HepG2 (cell line): ENCODE measurements at regions of chr12 and their contacts with region 1.

Region 1: DNA sequence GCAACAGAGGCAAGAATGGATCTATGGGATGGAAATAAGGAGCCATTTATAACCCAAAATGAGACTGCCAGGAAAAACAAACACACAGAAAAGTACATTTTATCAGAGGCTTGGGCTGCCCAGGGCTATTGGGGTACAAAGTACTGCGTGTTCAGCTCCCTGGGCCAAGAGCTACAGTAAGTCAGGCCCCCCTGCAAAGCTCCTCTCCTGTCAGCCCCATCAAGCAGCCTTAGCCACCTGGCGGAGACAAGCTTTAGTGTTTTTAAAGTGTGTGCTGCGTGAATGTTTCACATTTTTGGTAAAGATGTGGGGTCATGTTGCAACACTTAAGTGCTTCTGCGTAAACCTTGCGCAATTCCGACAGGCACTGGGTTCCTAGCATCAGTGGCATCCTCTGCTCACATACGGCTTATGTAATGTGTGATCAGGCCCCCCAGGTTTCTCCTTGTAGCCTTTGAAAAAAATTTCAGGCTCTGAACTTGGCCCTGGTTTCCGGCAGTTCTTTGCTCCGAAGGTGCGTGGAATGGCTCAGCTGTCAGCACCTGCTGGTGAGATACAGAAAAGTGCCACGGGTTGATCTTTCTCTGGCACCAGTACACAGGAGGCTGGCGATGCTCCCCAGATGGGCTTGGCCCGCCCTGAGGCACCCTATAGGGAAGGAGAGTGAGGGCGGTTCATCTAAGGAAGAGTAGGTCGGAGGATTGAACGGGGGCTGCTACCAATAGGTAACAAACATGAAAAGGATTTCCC is 198.7 kb upstream of the EEA1 start:
- DNase-seq: peak; percentile 98
- ATAC-seq: peak; percentile 95
- H3K4me3 ChIP-seq: peak overlapping the region in 2 of 3 experiments; percentile 6 to 50; a peak in 2 of 6 replicates
- H3K27ac ChIP-seq: peak overlapping the region; percentile 81
- H3K4me1 ChIP-seq: peaks cover 86% of the 10 kb centered on the region
- H3K27me3 ChIP-seq: no peaks in the 10 kb centered on the region
- CTCF ChIP-seq: peak; percentile 88
- EP300 ChIP-seq: peak; percentile 93 to 99
- POLR2A ChIP-seq: 0 out of 4 replicates have a peak, but pooled peaks of 1 of the 2 experiments have one; percentile 10
- RAD21 ChIP-seq: peak; percentile 93

Region 2: DNA sequence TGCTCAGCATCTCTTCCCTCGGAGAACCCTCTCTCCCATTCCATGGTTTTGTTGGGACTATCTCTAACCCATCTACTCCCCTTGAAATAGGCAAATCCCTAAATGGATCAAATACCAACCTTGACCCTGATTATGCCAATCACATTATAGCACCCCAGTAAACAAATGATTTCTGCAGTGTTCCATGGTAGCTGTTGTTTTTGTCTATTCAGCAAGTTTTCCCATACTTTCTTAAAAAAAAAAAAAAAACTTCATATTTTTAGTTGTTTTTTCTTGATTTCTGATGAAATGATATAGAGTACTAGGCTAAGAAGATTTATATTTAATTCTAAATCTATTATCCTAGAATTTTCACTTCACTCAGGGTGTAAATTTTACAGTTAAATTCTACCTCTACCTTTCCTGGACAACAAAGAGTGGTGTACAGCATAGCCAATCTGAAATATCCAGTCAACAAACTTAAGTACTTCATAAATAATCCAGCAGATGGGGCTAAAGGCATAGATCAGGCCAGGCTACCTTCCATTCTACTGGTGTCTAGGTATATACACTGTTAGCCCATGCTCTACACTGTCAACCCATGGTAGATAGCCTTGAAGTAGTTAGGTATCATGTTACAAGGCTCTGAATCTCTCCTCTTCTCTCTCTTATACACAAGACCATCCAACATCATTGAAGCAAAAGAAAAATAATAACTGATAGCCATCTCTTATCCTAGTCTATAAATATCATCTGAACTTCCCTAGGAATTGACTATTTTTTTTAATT is 342.8 kb before region 1 on chr12:
- CTCF ChIA-PET with region 1: interaction called, 4 read pairs
- POLR2A ChIA-PET with region 1: no interaction called
- in situ Hi-C with region 1: no loop called
- intact Hi-C with region 1: loop called (anchors 10 kb)
- DNase-seq: peak; percentile 85
- ATAC-seq: peak; percentile 100
- H3K4me3 ChIP-seq: no peak overlapping the region
- H3K27ac ChIP-seq: no peak overlapping the region
- H3K4me1 ChIP-seq: no peaks in the 10 kb centered on the region
- H3K27me3 ChIP-seq: no peaks in the 10 kb centered on the region
- CTCF ChIP-seq: peak; percentile 85
- EP300 ChIP-seq: no peak
- POLR2A ChIP-seq: no peak
- RAD21 ChIP-seq: peak; percentile 75

Region 3: DNA sequence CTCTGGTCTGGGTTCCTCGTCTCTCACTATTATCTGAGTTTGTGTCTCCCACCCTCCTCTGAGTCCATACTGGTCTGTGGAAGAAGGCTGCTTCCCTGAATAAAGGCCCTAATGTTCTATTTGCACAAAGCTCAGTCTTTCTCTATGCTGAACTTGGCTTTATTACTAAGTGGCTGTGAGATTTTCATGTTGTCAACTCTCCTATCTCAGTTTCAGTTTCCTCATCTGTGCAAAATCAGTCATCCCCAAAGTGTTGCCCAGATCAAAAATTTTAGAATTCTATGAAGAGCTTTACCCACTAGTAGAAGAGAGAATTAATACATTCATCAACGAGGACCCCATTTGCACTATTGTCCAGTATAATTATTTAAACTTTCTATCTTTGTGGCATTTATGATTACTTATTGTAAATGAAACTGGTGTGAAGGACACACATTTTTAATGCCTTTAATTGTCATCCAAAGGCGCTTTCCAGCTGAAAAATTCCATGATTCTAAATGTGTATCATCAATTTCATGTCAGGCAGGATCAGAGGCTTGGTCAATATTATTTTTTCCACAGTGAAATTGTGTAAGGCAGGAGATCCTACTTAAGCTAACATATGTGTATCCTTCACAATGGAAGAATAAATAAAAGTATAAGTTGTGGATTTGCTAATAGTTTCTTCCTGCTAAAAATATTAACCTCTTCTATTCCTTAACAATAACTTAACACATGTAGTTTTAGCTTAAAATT is 119.5 kb before region 1 on chr12:
- CTCF ChIA-PET with region 1: no interaction called
- POLR2A ChIA-PET with region 1: interaction called, 9 read pairs
- in situ Hi-C with region 1: no loop called
- intact Hi-C with region 1: loop called (anchors 1 kb)
- DNase-seq: peak; percentile 62
- ATAC-seq: no peak
- H3K4me3 ChIP-seq: peak overlapping the region; percentile 25 to 68 (median 50); a peak in 5 of 6 replicates
- H3K27ac ChIP-seq: peak overlapping the region; percentile 89
- H3K4me1 ChIP-seq: peaks cover 79% of the 10 kb centered on the region
- H3K27me3 ChIP-seq: no peaks in the 10 kb centered on the region
- CTCF ChIP-seq: no peak
- EP300 ChIP-seq: no peak; a peak in 1 of 4 replicates
- POLR2A ChIP-seq: no peak
- RAD21 ChIP-seq: no peak

Region 4: GRCh38 chr12:93025145-93025805 is 102.5 kb before region 1 on chr12:
- CTCF ChIA-PET with region 1: interaction called, 6 read pairs
- POLR2A ChIA-PET with region 1: interaction called, 29 read pairs
- in situ Hi-C with region 1: loop called (anchors 5 kb)
- intact Hi-C with region 1: no loop called
- DNase-seq: no peak
- ATAC-seq: peak; percentile 58
- H3K4me3 ChIP-seq: no peak overlapping the region
- H3K27ac ChIP-seq: no peak overlapping the region
- H3K4me1 ChIP-seq: peaks cover 55% of the 10 kb centered on the region
- H3K27me3 ChIP-seq: no peaks in the 10 kb centered on the region
- CTCF ChIP-seq: peak; percentile 76
- EP300 ChIP-seq: peak in 1 of 2 experiments; percentile 9; a peak in 1 of 4 replicates
- POLR2A ChIP-seq: no peak
- RAD21 ChIP-seq: peak; percentile 72

Region 5: DNA sequence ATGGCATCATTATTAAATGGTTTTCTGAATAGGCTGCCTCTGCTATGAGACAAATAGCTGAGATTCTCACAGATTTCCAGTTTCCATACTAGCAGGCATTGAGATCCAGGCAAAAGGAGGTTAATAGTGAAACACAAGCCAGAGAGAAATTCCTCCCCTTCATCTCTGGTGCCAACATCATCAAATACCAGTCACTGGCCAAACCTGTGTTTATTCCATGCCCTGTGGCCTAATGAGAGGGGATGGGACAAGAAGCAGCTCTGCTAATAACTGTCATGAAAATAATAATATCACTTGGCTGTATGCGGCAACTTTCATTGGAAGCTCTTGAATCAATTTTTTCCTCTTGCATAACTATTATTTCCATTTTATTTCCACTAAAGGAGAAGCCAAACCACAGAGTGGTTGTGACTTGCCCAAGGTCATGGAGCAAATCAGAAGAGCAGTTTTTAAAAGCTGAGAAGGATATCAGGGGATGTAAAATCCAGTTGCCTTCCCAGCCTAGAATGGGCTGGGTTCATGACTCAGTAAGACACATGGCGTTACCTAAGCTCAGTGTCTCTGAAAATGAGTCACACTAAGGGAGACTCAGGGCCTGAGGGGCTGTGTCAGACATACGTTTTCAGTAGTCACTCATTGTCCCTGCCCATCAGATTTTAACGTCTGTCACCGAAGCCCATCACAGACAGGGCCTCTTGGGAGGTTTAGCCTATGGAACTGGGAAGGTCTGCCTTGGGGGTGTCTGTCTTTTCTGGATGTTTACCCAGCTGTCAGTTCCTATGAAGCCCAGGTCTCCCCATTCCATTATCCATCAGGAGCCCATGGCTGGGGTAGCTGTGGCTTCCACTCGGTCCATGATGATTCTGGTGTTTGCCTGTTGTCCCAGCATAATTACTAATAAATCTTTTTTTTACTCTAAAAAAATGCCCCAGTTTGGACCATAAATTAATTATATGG is 10.2 kb after region 1 on chr12:
- CTCF ChIA-PET with region 1: no interaction called
- POLR2A ChIA-PET with region 1: interaction called, 23 read pairs
- in situ Hi-C with region 1: no loop called
- intact Hi-C with region 1: loop called (anchors 1 kb)
- DNase-seq: no peak
- ATAC-seq: no peak
- H3K4me3 ChIP-seq: no peak overlapping the region
- H3K27ac ChIP-seq: no peak overlapping the region
- H3K4me1 ChIP-seq: peaks cover 90% of the 10 kb centered on the region
- H3K27me3 ChIP-seq: no peaks in the 10 kb centered on the region
- CTCF ChIP-seq: no peak
- EP300 ChIP-seq: no peak
- POLR2A ChIP-seq: no peak
- RAD21 ChIP-seq: no peak

Region 6: DNA sequence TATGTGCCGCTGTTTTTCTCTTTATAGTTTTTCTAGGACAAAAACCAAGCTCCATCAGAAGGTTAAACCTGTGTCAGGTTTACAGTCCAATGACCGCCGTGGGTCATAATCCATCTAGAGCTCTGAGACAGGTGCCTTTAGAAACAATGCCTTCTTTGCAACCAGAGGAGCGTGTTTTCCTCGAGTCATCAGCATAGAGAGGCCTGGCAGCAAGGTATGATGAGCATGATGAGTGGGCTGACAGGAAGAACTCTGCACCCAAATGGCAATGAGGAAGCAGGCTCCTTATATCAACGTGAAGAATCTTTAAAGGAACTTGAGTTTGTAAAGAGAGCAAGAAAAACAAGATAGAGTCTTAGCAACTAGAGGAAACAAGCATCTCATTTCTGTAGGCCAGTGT is 189.5 kb after region 1 on chr12:
- CTCF ChIA-PET with region 1: no interaction called
- POLR2A ChIA-PET with region 1: no interaction called
- in situ Hi-C with region 1: no loop called
- intact Hi-C with region 1: loop called (anchors 5 kb)
- DNase-seq: peak; percentile 84
- ATAC-seq: peak; percentile 37
- H3K4me3 ChIP-seq: no peak overlapping the region; a peak in 1 of 6 replicates
- H3K27ac ChIP-seq: peak overlapping the region; percentile 69
- H3K4me1 ChIP-seq: peaks cover 81% of the 10 kb centered on the region
- H3K27me3 ChIP-seq: no peaks in the 10 kb centered on the region
- CTCF ChIP-seq: no peak
- EP300 ChIP-seq: peak in 1 of 2 experiments; percentile 56; a peak in 2 of 4 replicates
- POLR2A ChIP-seq: no peak
- RAD21 ChIP-seq: no peak